CD8-positive, alpha-beta memory T cell (primary cell): ENCODE measurements at regions of chr1 and their contacts with region 1.

Region 1: DNA sequence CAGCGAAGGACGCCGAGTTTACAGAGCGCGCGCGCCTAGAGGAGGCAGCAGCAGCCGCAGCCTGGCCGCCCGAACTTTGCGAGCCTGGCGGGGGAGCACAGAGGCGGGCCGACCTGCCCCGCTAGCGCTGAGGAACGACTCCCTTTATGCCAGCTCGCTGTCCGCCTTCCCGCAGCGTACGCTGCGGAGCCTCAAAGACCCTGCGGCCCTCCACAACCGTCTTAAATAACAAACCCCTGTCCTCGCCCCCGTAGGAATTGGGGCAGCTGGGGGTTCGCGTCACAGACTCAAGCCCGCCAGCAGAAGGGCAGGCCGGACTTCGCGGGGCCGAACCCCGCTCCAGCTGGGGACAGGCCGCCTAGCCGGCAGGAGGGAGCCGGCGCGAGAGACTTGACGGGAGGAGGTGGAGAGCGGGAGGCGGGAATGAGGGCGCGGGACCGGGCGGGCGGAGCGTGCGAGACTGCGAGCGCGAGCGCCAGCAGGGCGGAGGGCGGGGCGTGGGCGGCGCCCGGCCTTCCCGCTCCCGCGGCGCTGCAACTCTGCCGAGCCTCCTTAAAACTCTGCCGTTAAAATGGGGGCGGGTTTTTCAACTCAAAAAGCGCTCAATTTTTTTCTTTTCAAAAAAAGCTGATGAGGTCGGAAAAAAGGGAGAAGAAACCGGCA is 1.8 kb upstream of the CDKN2C start:
- DNase-seq: peak; percentile 81 to 86 (median 84)
- H3K4me3 ChIP-seq: peak overlapping the region; percentile 92
- H3K4me3 Mint-ChIP-seq: peak overlapping the region; percentile 91 to 99 (median 98)
- H3K27ac ChIP-seq: peak overlapping the region; percentile 90
- H3K27ac Mint-ChIP-seq: peak overlapping the region; percentile 84 to 98 (median 96)
- H3K4me1 ChIP-seq: peaks cover 17% of the 10 kb centered on the region
- H3K4me1 Mint-ChIP-seq: peaks cover 24 to 32% (median 29%) of the 10 kb centered on the region in 3 donors
- H3K27me3 ChIP-seq: no peaks in the 10 kb centered on the region
- H3K27me3 Mint-ChIP-seq: no peaks in the 10 kb centered on the region

Region 2: GRCh38 chr1:50913954-50914353 is 54.3 kb before region 1 on chr1:
- CTCF ChIA-PET with region 1: no interaction called
- POLR2A ChIA-PET with region 1: no interaction called
- DNase-seq: no peak
- H3K4me3 ChIP-seq: no peak overlapping the region
- H3K4me3 Mint-ChIP-seq: no peak overlapping the region
- H3K27ac ChIP-seq: no peak overlapping the region
- H3K27ac Mint-ChIP-seq: peak overlapping the region in 1 of 8 donors; percentile 30
- H3K4me1 ChIP-seq: no peaks in the 10 kb centered on the region
- H3K4me1 Mint-ChIP-seq: peaks cover 19 to 37% (median 36%) of the 10 kb centered on the region in 3 donors
- H3K27me3 ChIP-seq: no peaks in the 10 kb centered on the region
- H3K27me3 Mint-ChIP-seq: no peaks in the 10 kb centered on the region

Region 3: GRCh38 chr1:50978144-50978851 is 10.0 kb after region 1 on chr1:
- CTCF ChIA-PET with region 1: interaction called, 21 read pairs
- POLR2A ChIA-PET with region 1: interaction called, 24 read pairs
- DNase-seq: peak in 4 of 5 donors; percentile 17 to 58 (median 22)
- H3K4me3 ChIP-seq: peak overlapping the region; percentile 59
- H3K4me3 Mint-ChIP-seq: peak overlapping the region; percentile 84 to 91 (median 88)
- H3K27ac ChIP-seq: peak overlapping the region; percentile 66
- H3K27ac Mint-ChIP-seq: peak overlapping the region in 7 of 8 donors; percentile 29 to 87 (median 83)
- H3K4me1 ChIP-seq: peaks cover 14% of the 10 kb centered on the region
- H3K4me1 Mint-ChIP-seq: peaks cover 23 to 27% (median 24%) of the 10 kb centered on the region in 3 donors
- H3K27me3 ChIP-seq: no peaks in the 10 kb centered on the region
- H3K27me3 Mint-ChIP-seq: peaks cover 1 to 22% of the 10 kb centered on the region in 2 donors

Region 4: GRCh38 chr1:51044834-51045233 is 76.5 kb after region 1 on chr1:
- CTCF ChIA-PET with region 1: no interaction called
- POLR2A ChIA-PET with region 1: no interaction called
- DNase-seq: no peak
- H3K4me3 ChIP-seq: no peak overlapping the region
- H3K4me3 Mint-ChIP-seq: no peak overlapping the region
- H3K27ac ChIP-seq: no peak overlapping the region
- H3K27ac Mint-ChIP-seq: no peak overlapping the region
- H3K4me1 ChIP-seq: no peaks in the 10 kb centered on the region
- H3K4me1 Mint-ChIP-seq: no peaks in the 10 kb centered on the region
- H3K27me3 ChIP-seq: no peaks in the 10 kb centered on the region
- H3K27me3 Mint-ChIP-seq: peaks cover 2 to 34% of the 10 kb centered on the region in 2 donors

Region 5: DNA sequence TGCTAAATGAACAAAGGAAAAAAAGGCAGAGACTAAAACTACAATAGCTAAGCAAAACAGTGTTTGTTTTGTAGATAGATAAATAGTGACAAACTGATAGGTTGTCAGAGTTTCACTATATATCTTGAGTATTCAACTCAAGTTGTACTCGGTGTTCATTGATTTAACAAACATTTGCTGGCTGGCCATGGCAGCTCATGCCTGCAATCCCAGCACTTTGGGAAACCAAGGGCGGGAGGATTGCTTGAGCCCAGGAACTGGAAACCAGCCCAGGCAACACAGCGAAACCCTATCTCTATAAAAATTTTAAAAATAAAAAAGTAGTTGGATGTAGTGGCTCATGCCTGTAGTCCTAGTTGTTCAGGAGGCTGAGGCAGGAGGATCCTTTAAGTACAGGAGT is 151.0 kb after region 1 on chr1:
- CTCF ChIA-PET with region 1: no interaction called
- POLR2A ChIA-PET with region 1: no interaction called
- DNase-seq: no peak
- H3K4me3 ChIP-seq: no peak overlapping the region
- H3K4me3 Mint-ChIP-seq: no peak overlapping the region
- H3K27ac ChIP-seq: no peak overlapping the region
- H3K27ac Mint-ChIP-seq: no peak overlapping the region
- H3K4me1 ChIP-seq: no peaks in the 10 kb centered on the region
- H3K4me1 Mint-ChIP-seq: peaks cover 0 to 5% (median 0%) of the 10 kb centered on the region in 3 donors
- H3K27me3 ChIP-seq: no peaks in the 10 kb centered on the region
- H3K27me3 Mint-ChIP-seq: peaks cover 3 to 41% of the 10 kb centered on the region in 2 donors

Region 6: GRCh38 chr1:51410568-51411460 is 442.5 kb after region 1 on chr1:
- CTCF ChIA-PET with region 1: no interaction called
- POLR2A ChIA-PET with region 1: no interaction called
- DNase-seq: no peak
- H3K4me3 ChIP-seq: no peak overlapping the region
- H3K4me3 Mint-ChIP-seq: no peak overlapping the region
- H3K27ac ChIP-seq: no peak overlapping the region
- H3K27ac Mint-ChIP-seq: no peak overlapping the region
- H3K4me1 ChIP-seq: no peaks in the 10 kb centered on the region
- H3K4me1 Mint-ChIP-seq: peaks cover 1 to 10% (median 4%) of the 10 kb centered on the region in 3 donors
- H3K27me3 ChIP-seq: no peaks in the 10 kb centered on the region
- H3K27me3 Mint-ChIP-seq: peaks cover 0 to 3% of the 10 kb centered on the region in 2 donors